ENCODE measurements at regions of chr12 and their contacts with region 1.

Region 1: DNA sequence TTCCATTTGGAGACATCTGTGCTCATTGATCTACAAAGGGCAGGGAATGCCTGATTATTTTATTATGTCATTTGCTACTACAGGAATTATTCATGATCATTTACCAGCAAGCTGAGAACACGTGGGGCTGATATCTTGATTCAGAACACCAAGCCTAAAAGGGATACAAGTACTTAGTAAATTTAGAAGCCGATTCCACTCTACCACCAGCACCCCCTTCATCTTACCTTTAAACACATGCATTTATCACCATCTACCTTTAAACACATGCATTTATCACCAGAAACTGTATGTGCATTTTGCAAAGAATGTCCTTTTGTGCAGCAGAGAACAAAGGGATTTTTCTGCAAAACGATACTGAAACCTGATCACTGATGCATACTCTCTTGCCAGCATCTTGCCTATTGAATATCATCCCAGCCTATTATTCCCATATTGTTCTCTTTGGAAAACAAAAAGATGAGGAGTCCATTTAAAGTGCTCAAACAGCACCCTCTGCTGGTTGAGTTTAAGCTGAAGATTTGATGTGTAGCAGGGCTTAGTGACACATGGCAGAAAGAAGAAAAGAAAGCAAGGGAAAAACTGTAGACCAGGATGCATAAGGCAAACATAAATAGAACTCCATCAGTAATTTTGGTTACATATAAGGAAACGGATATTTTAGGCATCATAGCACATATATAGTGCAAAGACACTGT is 132.6 kb upstream of the PLEKHG7 start:
- DNase-seq: peak; percentile 60
- H3K4me3 Mint-ChIP-seq: no peak overlapping the region
- H3K27ac Mint-ChIP-seq: no peak overlapping the region
- H3K4me1 Mint-ChIP-seq: peaks cover 25% of the 10 kb centered on the region
- H3K27me3 Mint-ChIP-seq: no peaks in the 10 kb centered on the region

Region 2: DNA sequence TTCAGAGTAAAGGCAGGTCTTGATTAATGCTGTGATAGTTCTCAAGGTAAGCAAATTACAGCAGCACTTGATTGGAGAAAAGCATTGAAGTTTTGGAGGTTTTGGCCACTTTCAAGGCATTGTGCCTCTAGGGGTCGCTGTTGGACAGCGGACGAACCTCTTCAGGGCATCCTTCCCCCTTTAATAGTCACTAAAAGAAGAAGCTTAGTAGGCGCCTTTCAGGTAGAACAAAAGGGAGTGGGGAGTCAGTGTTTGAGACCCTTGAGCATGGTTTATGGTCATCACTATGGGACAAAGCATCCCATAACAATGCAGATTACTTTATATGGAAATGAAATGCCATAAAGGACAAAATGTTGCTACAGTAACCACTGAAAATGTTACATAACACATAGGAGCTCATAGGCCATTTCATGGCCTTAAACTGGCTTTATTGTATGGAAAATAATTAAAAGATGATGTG is 1188.1 kb before region 1 on chr12:
- CTCF ChIA-PET with region 1: interaction called, 28 read pairs
- DNase-seq: peak; percentile 89
- H3K4me3 Mint-ChIP-seq: peak overlapping the region; percentile 67
- H3K27ac Mint-ChIP-seq: no peak overlapping the region
- H3K4me1 Mint-ChIP-seq: peaks cover 12% of the 10 kb centered on the region
- H3K27me3 Mint-ChIP-seq: no peaks in the 10 kb centered on the region

Region 3: DNA sequence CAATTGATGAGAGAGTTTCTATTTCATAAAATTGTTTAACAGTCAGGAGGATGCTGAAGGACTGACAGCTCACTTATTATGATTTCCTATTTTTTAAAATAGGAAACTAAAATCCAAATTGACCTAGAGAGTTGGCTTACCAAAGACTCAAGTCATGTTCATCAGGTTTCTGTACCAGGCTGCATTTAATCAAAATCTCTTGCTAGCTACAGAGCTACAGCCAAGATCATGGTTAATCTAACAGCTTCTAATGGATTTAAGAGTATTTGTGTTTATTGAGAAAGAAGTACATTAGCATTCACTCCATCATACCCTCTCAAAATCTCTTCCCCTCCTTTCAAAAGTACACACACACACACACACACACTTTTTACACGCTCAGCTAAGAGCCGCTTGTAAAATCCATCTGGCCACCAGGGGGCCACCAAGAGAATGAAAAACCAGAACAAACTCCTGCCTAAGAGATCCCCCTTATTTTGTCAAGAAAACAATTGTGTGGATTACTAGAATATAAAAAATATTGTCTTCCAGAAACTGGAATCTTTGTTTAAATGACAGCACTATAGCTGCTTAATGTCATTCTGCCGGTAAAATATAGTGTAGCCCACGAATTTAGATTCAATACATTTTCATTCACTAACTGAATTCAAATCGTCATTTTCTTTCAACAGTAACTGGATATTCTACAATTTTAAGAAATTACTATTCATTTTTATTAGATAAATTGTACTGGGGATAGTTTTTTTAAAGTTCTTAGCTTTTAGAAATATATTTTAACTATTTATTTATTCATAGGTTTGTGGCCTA is 758.5 kb before region 1 on chr12:
- CTCF ChIA-PET with region 1: interaction called, 12 read pairs
- DNase-seq: peak; percentile 76
- H3K4me3 Mint-ChIP-seq: no peak overlapping the region
- H3K27ac Mint-ChIP-seq: no peak overlapping the region
- H3K4me1 Mint-ChIP-seq: peaks cover 10% of the 10 kb centered on the region
- H3K27me3 Mint-ChIP-seq: no peaks in the 10 kb centered on the region

Region 4: GRCh38 chr12:92145731-92146496 is 424.3 kb before region 1 on chr12 and contains the start of gene BTG1:
- CTCF ChIA-PET with region 1: interaction called, 11 read pairs
- DNase-seq: peak; percentile 99
- H3K4me3 Mint-ChIP-seq: peak within 1 kb of the TSS; percentile 100
- H3K27ac Mint-ChIP-seq: peak within 1 kb of the TSS; percentile 100
- H3K4me1 Mint-ChIP-seq: peaks cover 23% of the 10 kb centered on the region
- H3K27me3 Mint-ChIP-seq: peaks cover 8% of the 10 kb centered on the region

Region 5: DNA sequence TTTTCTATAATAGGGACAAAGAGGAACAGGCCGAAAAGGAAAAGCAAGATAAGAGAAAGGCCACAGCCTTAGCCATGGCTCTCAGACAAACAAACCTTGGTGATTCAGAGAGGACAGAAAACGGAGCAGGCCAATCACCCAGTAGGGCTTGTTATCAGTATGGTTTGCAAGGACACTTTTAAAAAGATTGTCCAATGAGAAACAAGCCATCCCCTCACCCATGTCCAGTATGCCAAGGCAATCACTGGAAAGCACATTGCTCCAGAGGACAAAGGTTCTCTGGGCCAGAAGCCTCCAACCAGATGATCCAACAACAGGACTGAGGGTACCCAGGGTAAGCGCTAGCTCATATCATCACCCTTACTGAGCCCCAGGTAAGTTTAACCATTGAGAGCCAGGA is 180.7 kb before region 1 on chr12:
- CTCF ChIA-PET with region 1: no interaction called
- DNase-seq: no peak
- H3K4me3 Mint-ChIP-seq: no peak overlapping the region
- H3K27ac Mint-ChIP-seq: no peak overlapping the region
- H3K4me1 Mint-ChIP-seq: peaks cover 25% of the 10 kb centered on the region
- H3K27me3 Mint-ChIP-seq: no peaks in the 10 kb centered on the region

Region 6: GRCh38 chr12:92505254-92506231 is 64.7 kb before region 1 on chr12:
- CTCF ChIA-PET with region 1: interaction called, 54 read pairs
- DNase-seq: peak; percentile 74
- H3K4me3 Mint-ChIP-seq: peak overlapping the region; percentile 68
- H3K27ac Mint-ChIP-seq: peak overlapping the region; percentile 89
- H3K4me1 Mint-ChIP-seq: peaks cover 42% of the 10 kb centered on the region
- H3K27me3 Mint-ChIP-seq: no peaks in the 10 kb centered on the region

Region 7: GRCh38 chr12:92539113-92539749 is 31.0 kb before region 1 on chr12:
- CTCF ChIA-PET with region 1: no interaction called
- DNase-seq: peak; percentile 50
- H3K4me3 Mint-ChIP-seq: no peak overlapping the region
- H3K27ac Mint-ChIP-seq: peak overlapping the region; percentile 95
- H3K4me1 Mint-ChIP-seq: peaks cover 69% of the 10 kb centered on the region
- H3K27me3 Mint-ChIP-seq: no peaks in the 10 kb centered on the region

Region 8: GRCh38 chr12:92602476-92602875 is 32.3 kb after region 1 on chr12:
- CTCF ChIA-PET with region 1: no interaction called
- DNase-seq: no peak
- H3K4me3 Mint-ChIP-seq: no peak overlapping the region
- H3K27ac Mint-ChIP-seq: no peak overlapping the region
- H3K4me1 Mint-ChIP-seq: no peaks in the 10 kb centered on the region
- H3K27me3 Mint-ChIP-seq: no peaks in the 10 kb centered on the region

Region 9: GRCh38 chr12:92649511-92650227 is 79.5 kb after region 1 on chr12:
- CTCF ChIA-PET with region 1: interaction called, 22 read pairs
- DNase-seq: peak; percentile 66
- H3K4me3 Mint-ChIP-seq: no peak overlapping the region
- H3K27ac Mint-ChIP-seq: no peak overlapping the region
- H3K4me1 Mint-ChIP-seq: peaks cover 3% of the 10 kb centered on the region
- H3K27me3 Mint-ChIP-seq: no peaks in the 10 kb centered on the region

Region 10: DNA sequence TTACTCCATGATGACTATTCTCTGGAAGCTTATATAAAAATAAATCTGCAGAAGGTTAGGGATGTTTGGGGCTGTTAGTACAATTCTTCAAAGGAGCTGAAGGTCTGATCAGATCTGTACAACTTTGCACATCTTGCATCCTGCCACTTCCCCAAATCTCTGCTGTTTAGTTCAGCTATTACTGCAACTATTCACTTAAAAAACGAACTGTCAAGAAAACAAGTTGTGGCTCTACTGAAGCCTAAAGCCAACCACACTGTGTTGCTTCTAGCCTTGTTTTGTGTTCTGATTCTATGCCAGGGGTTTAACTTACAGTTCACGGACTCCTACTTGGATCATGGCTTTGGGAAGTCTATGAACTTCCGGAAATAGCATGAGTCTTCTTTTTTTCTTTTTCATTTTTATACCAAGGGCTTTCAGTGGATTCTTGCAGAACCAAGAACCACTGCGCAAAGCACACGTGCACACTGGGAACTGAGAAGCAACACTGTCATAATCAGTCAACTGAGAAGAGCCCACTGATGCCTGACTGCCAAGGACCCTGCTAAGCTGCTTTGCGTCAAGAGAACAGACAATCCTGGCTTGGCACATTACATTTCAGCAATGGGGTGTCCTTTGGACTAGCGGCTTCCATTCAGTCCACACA is 425.2 kb after region 1 on chr12:
- CTCF ChIA-PET with region 1: no interaction called
- DNase-seq: no peak
- H3K4me3 Mint-ChIP-seq: no peak overlapping the region
- H3K27ac Mint-ChIP-seq: no peak overlapping the region
- H3K4me1 Mint-ChIP-seq: no peaks in the 10 kb centered on the region
- H3K27me3 Mint-ChIP-seq: peaks cover 4% of the 10 kb centered on the region